ENCODE measurements at regions of chr15 and their contacts with region 1.

Region 1: DNA sequence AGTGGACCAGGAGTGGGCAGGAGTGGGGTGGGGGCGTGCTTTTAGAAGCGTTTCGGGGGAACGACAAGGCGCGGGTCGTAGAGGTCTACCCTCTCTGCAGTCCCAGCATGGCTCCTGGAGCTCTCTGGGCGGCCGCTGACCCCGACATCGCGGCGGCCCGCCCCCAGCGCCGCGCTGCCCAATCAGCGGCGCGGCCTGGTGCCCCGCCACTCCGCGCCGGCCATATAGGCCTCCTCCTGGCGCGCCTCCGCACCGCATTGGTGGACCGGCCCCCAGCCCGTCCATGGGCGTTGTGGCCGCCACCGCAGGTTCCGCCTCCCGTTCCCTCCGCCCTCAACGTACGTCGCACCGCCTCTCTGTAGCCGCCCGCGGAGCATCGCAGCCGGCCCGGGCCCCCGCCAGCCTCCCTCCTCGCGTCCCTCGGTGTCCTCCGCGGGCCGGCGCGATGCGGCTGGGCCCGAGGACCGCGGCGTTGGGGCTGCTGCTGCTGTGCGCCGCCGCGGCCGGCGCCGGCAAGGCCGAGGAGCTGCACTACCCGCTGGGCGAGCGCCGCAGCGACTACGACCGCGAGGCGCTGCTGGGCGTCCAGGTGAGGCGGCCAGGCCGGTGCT is at the start of gene RCN2:
- DNase-seq: peak; percentile 93 to 95
- ATAC-seq: peak; percentile 99 to 100
- H3K4me3 ChIP-seq: peak within 1 kb of the TSS; percentile 87
- H3K27ac ChIP-seq: peak within 1 kb of the TSS; percentile 85 to 92
- H3K4me1 ChIP-seq: peaks cover 13% of the 10 kb centered on the region
- CTCF ChIP-seq: no peak
- EP300 ChIP-seq: no peak
- POLR2A ChIP-seq: peak; percentile 96
- RAD21 ChIP-seq: no peak
- polyA plus RNA-seq, gene RCN2: 102 and 152 TPM in 2 replicates

Region 2: GRCh38 chr15:76916369-76916768 is 15.1 kb before region 1 on chr15:
- CTCF ChIA-PET with region 1: interaction called, 3 read pairs
- POLR2A ChIA-PET with region 1: interaction called, 19 read pairs
- DNase-seq: no peak
- ATAC-seq: no peak; a peak in 1 of 6 replicates
- H3K4me3 ChIP-seq: no peak overlapping the region
- H3K27ac ChIP-seq: no peak overlapping the region
- H3K4me1 ChIP-seq: no peaks in the 10 kb centered on the region
- CTCF ChIP-seq: no peak
- EP300 ChIP-seq: no peak
- POLR2A ChIP-seq: no peak
- RAD21 ChIP-seq: no peak

Region 3: DNA sequence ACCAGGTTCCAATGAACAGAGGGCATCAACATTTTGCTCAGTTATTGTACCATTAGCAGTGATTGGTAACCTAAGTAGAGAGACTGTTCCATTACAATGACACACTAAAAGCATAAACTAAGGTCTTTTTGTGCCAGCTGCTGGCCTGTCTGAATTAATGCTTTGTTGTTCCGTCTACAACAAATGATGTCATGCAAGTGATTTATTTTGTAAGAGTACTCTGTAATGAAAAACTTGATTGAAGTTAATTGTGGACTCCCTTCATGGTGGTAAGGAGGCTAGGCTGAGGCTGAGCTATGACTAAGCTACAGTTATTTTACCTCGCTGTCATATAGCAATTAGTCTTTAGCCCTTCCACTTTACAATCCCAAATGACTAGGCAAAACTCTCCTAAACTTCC is 23.2 kb after region 1 on chr15:
- CTCF ChIA-PET with region 1: no interaction called
- POLR2A ChIA-PET with region 1: no interaction called
- DNase-seq: no peak
- ATAC-seq: no peak
- H3K4me3 ChIP-seq: no peak overlapping the region
- H3K27ac ChIP-seq: no peak overlapping the region
- H3K4me1 ChIP-seq: no peaks in the 10 kb centered on the region
- CTCF ChIP-seq: no peak
- EP300 ChIP-seq: no peak
- POLR2A ChIP-seq: no peak
- RAD21 ChIP-seq: no peak

Measured in A549 (cell line).